Activated T-helper 2 cell treated with anti-CD3 and anti-CD28 coated beads, Interferon-gamma antibody, Interleukin-2, Interleukin-4, amounts not matched to agents 10 μg/mL and 5 μg/mL and 100 μg/mL, durations not matched to agents 14 hours and 24 hours and 36 hours (primary cell): ENCODE measurements at regions of chr1 and their contacts with region 1.

Region 1: DNA sequence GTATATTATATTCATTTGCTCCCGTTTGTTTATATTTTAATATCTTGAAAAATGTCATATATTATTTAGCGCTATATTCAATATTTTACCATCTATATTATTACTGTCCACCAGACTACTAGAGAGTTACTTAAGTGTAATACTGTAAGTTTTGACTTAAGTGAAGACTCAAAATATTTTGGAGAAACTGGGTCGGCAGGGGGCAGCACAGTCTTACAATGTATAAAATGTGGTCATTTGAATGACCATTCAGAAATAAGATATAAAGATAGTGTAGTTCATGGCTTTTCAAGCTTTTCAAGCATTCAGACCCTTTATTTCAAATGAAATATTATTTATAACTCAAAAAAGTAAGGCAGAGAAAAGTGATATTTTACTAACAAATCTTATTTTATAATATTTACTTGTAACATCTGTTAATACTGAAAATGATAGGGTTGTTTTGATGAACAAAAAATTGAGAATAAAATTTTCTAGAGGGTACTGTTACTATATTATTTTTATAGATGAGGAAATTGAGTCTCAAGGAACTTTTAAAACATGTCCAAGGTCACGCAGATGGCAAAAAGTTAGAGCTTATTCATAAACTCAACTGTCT is 89.0 kb upstream of the SERTAD4 start:
- DNase-seq: no peak
- H3K4me3 Mint-ChIP-seq: no peak overlapping the region
- H3K27ac Mint-ChIP-seq: no peak overlapping the region
- H3K4me1 Mint-ChIP-seq: no peaks in the 10 kb centered on the region
- H3K27me3 Mint-ChIP-seq: no peaks in the 10 kb centered on the region

Region 2: DNA sequence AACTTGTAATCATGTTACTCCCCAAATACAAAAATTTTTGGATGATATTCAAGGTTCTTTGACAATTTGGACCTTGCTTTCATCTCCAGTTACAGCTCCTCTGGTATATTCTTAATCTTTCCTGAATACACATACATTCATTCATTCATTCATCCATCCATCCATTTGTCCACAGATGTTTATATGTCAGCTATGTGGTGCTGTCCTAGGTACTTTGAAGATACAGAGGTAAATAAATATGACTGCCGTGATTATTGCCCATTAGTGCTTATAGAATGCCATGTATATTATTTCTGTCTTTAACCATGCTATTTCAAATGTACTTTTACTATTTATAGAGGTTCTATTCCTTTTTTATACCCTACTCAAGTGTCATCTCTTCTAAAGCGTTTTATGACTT is 133.4 kb before region 1 on chr1:
- intact Hi-C with region 1: no loop called
- DNase-seq: no peak
- H3K4me3 Mint-ChIP-seq: no peak overlapping the region
- H3K27ac Mint-ChIP-seq: no peak overlapping the region
- H3K4me1 Mint-ChIP-seq: no peaks in the 10 kb centered on the region
- H3K27me3 Mint-ChIP-seq: peaks cover 3% of the 10 kb centered on the region

Region 3: GRCh38 chr1:210170220-210170619 is 26.7 kb after region 1 on chr1:
- intact Hi-C with region 1: no loop called
- DNase-seq: no peak
- H3K4me3 Mint-ChIP-seq: no peak overlapping the region
- H3K27ac Mint-ChIP-seq: no peak overlapping the region
- H3K4me1 Mint-ChIP-seq: no peaks in the 10 kb centered on the region
- H3K27me3 Mint-ChIP-seq: no peaks in the 10 kb centered on the region

Region 4: GRCh38 chr1:210311726-210312493 is 168.3 kb after region 1 on chr1:
- intact Hi-C with region 1: loop called (anchors 1 kb)
- DNase-seq: no peak
- H3K4me3 Mint-ChIP-seq: no peak overlapping the region
- H3K27ac Mint-ChIP-seq: no peak overlapping the region
- H3K4me1 Mint-ChIP-seq: peaks cover 3% of the 10 kb centered on the region
- H3K27me3 Mint-ChIP-seq: peaks cover 41% of the 10 kb centered on the region